K562 (cell line): ENCODE measurements at regions of chr2 and their contacts with region 1.

Region 1: DNA sequence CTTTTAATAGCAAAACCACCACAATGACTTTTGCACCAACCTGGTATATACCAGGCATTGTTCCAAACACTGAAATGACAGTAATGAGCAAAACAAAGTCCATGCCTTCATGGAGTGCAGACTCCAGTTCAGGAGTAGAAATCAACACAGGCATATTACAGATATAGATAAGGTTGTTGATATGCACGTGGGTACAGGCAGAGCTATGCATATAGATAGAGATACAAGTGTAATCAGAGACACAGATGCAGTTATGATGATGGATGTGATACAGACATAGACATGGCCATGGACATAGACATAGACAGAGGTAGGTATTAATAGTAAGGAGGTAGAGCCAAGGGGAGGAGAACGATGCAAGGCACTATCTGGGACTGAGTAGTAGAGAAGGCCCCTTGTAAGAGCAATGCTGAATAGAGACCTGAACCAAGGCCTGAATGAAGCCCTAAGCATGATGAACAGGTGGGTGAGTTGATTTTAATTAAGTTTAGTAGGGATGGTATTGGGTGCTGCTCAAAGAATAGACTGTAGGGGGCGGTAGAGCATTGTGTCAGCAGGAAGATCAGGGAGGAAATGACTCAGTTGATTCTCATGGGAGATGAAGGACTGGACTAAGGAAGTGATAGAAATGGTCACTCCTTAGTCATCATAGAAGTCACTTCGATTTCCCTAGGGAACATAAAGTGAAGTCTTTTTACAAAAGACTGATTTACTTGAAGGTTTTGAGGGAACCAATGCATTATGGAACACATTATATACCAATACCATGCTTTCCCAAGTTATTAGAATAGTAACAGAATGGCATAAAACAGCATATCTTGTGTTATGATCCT is 39.4 kb downstream of the CMPK2 start:
- DNase-seq: peak; percentile 72 to 88 (median 80)
- ATAC-seq: peak; percentile 98
- H3K4me3 ChIP-seq: no peak overlapping the region
- H3K27ac ChIP-seq: peak overlapping the region; percentile 66
- H3K4me1 ChIP-seq: peaks cover 0 to 3% of the 10 kb centered on the region in 2 experiments; a peak in 1 of 5 replicates
- H3K27me3 ChIP-seq: peaks cover 4 to 11% of the 10 kb centered on the region in 2 experiments; a peak in 4 of 5 replicates
- CTCF ChIP-seq: peak; percentile 75 to 96 (median 89)
- EP300 ChIP-seq: peak; percentile 89
- POLR2A ChIP-seq: no peak
- RAD21 ChIP-seq: peak; percentile 92 to 98

Region 2: DNA sequence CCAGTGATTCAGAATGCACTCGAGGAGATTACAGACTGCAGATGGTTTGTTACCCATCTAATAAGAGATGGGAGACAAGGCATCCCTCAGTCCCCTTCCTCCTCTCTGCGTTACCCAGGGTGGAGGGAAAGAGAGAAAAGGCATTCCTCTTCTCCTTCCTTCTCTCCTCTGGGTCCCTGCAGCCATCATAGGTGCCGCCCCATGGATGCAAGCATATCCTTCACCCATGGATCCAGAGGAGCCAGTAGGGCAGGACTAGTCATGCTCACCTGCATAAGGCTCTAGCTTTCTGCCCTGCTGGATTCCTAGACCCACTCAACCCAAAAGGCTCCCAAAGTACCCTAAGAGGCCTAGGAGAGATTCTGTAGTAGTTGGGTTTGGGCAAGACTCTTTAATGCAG is 19.0 kb after region 1 on chr2:
- CTCF ChIA-PET with region 1: no interaction called
- POLR2A ChIA-PET with region 1: no interaction called
- in situ Hi-C with region 1: no loop called
- intact Hi-C with region 1: loop called (anchors 1 kb)
- DNase-seq: peak; percentile 41 to 70 (median 52)
- ATAC-seq: no peak
- H3K4me3 ChIP-seq: no peak overlapping the region
- H3K27ac ChIP-seq: no peak overlapping the region
- H3K4me1 ChIP-seq: peaks cover 5 to 13% of the 10 kb centered on the region in 2 experiments; a peak in 4 of 5 replicates
- H3K27me3 ChIP-seq: no peaks in the 10 kb centered on the region
- CTCF ChIP-seq: no peak
- EP300 ChIP-seq: no peak; the same call in 1 of the 2 replicates
- POLR2A ChIP-seq: no peak
- RAD21 ChIP-seq: no peak

Region 3: DNA sequence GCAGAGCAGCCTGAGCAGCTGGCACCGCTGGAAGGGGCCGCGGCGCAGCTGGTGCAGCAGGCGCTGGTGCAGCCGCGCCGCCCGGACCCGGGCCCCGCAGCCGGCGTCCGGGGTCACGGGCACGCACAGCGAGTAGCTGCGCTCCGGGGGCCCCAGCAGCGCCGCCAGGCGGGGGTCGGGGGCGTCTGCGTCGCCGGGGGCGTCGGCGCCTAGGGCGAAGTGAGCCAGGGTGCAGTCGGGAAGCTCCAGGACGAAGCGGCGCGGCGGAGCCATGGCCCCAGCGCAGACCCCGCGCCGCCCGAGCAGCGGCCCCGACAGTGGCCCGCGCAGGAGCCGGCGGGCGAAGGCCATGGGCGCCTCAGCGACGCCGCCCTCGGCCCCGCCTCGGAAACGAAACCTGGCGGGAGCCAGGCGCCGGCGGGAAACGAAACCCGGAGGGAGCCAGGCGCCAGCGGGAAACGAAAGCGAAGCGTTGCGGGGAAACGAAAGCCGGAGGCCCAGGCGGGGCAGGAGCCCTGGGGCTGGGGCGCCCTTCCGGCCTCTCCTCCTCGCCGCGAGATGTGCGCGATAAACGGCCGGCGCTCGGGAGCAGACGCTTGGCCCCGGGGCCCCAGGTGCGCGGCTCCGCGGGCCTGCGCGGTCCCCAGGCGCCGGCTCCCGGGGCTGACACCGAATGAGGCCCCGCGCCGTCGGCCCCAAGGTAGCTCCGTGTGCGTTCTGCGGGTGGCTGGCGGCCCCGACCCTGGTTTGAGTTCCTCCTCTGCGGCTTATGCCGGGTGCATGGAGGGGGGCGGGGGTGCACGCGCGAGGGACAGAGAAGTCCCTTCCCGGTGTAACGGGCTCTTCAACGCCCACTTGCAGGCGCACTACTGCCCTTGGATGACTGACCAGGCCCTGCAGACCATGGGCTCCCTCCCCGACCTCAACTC is 39.3 kb after region 1 on chr2 and contains the start of gene CMPK2:
- CTCF ChIA-PET with region 1: interaction called, 8 read pairs
- POLR2A ChIA-PET with region 1: interaction called, 3 read pairs
- in situ Hi-C with region 1: no loop called
- intact Hi-C with region 1: loop called (anchors 1 kb)
- DNase-seq: peak; percentile 75 to 84 (median 82)
- ATAC-seq: peak; percentile 88
- H3K4me3 ChIP-seq: peak within 1 kb of the TSS; percentile 58
- H3K27ac ChIP-seq: peak within 1 kb of the TSS; percentile 86
- H3K4me1 ChIP-seq: peaks cover 14 to 19% of the 10 kb centered on the region in 2 experiments
- H3K27me3 ChIP-seq: no peaks in the 10 kb centered on the region
- CTCF ChIP-seq: peak; percentile 31 to 46 (median 36); a peak in 3 of 6 replicates
- EP300 ChIP-seq: peak; percentile 40; the same call in 1 of the 2 replicates
- POLR2A ChIP-seq: peak; percentile 57; the same call in 1 of the 2 replicates
- RAD21 ChIP-seq: peak in 1 of 2 experiments; percentile 33; a peak in 2 of 4 replicates
- polyA plus RNA-seq, gene CMPK2: 2.6 to 2.9 TPM

Region 4: GRCh38 chr2:6917071-6917760 is 90.9 kb after region 1 on chr2 and contains the start of gene RNF144A:
- CTCF ChIA-PET with region 1: interaction called, 3 read pairs
- POLR2A ChIA-PET with region 1: interaction called, 4 read pairs
- in situ Hi-C with region 1: no loop called
- intact Hi-C with region 1: loop called (anchors 1 kb)
- DNase-seq: peak; percentile 75 to 93 (median 92)
- ATAC-seq: peak; percentile 88
- H3K4me3 ChIP-seq: peak within 1 kb of the TSS; percentile 61
- H3K27ac ChIP-seq: peak within 1 kb of the TSS; percentile 51; the same call in 1 of the 3 replicates
- H3K4me1 ChIP-seq: peaks cover 3 to 25% of the 10 kb centered on the region in 2 experiments; a peak in 4 of 5 replicates
- H3K27me3 ChIP-seq: 0 out of 5 replicates have a peak, but pooled peaks cover 0 to 4% of the 10 kb centered on the region in 2 experiments
- CTCF ChIP-seq: peak; percentile 25 to 54 (median 53); a peak in 4 of 6 replicates
- EP300 ChIP-seq: no peak
- POLR2A ChIP-seq: no peak
- RAD21 ChIP-seq: peak in 1 of 2 experiments; percentile 39; a peak in 2 of 4 replicates
- polyA plus RNA-seq, gene RNF144A: 0.96 to 1.4 TPM

Region 5: GRCh38 chr2:7014174-7014640 is 187.9 kb after region 1 on chr2:
- CTCF ChIA-PET with region 1: no interaction called
- POLR2A ChIA-PET with region 1: interaction called, 3 read pairs
- in situ Hi-C with region 1: loop called (anchors 25 kb)
- intact Hi-C with region 1: no loop called
- DNase-seq: peak; percentile 28 to 61 (median 32)
- ATAC-seq: peak; percentile 95
- H3K4me3 ChIP-seq: no peak overlapping the region
- H3K27ac ChIP-seq: no peak overlapping the region
- H3K4me1 ChIP-seq: peaks cover 2 to 5% of the 10 kb centered on the region in 2 experiments; a peak in 2 of 5 replicates
- H3K27me3 ChIP-seq: no peaks in the 10 kb centered on the region
- CTCF ChIP-seq: peak; percentile 64 to 73 (median 70)
- EP300 ChIP-seq: no peak
- POLR2A ChIP-seq: no peak
- RAD21 ChIP-seq: peak; percentile 47 to 54

Region 6: GRCh38 chr2:7044261-7045250 is 218.3 kb after region 1 on chr2:
- CTCF ChIA-PET with region 1: no interaction called
- POLR2A ChIA-PET with region 1: no interaction called
- in situ Hi-C with region 1: no loop called
- intact Hi-C with region 1: loop called (anchors 1 kb)
- DNase-seq: peak; percentile 73 to 83 (median 79)
- ATAC-seq: peak; percentile 96
- H3K4me3 ChIP-seq: no peak overlapping the region
- H3K27ac ChIP-seq: no peak overlapping the region
- H3K4me1 ChIP-seq: no peaks in the 10 kb centered on the region; a peak in 1 of 5 replicates
- H3K27me3 ChIP-seq: peaks cover 0 to 4% of the 10 kb centered on the region in 2 experiments; a peak in 1 of 5 replicates
- CTCF ChIP-seq: peak; percentile 80 to 92 (median 81)
- EP300 ChIP-seq: no peak
- POLR2A ChIP-seq: no peak
- RAD21 ChIP-seq: peak; percentile 60 to 75; a peak in 3 of 4 replicates

Region 7: GRCh38 chr2:7083577-7084509 is 257.5 kb after region 1 on chr2:
- CTCF ChIA-PET with region 1: interaction called, 5 read pairs
- POLR2A ChIA-PET with region 1: no interaction called
- in situ Hi-C with region 1: no loop called
- intact Hi-C with region 1: loop called (anchors 1 kb)
- DNase-seq: peak; percentile 11 to 68 (median 30)
- ATAC-seq: peak; percentile 95
- H3K4me3 ChIP-seq: no peak overlapping the region
- H3K27ac ChIP-seq: no peak overlapping the region
- H3K4me1 ChIP-seq: no peaks in the 10 kb centered on the region
- H3K27me3 ChIP-seq: peaks cover 2 to 6% of the 10 kb centered on the region in 2 experiments; a peak in 2 of 5 replicates
- CTCF ChIP-seq: peak; percentile 71 to 86 (median 82)
- EP300 ChIP-seq: no peak
- POLR2A ChIP-seq: no peak
- RAD21 ChIP-seq: peak; percentile 64 to 88